ENCODE measurements at regions of chr6 and their contacts with region 1.

Region 1: DNA sequence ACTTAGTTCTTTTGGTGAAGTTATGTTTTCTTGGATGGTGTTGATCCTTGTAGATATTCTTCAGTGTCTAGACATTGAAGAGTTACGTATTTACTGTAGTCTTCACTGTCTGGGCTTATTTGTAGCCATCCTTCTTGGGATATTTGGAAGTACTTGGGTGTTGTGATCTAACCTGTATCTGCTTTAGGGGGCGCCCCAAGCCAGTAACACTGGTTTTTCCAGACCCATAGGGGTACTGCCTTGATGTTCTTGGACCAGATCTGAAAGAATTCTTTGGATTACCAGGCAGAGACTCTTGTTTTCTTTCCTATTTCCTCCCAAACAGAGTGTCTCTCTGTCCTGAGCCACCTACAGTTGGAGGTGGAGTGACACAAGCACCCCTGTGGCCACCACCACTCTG is 309.1 kb upstream of the IMPG1 start:
- DNase-seq: no peak
- ATAC-seq: no peak
- H3K4me3 ChIP-seq: no peak overlapping the region
- H3K27ac ChIP-seq: no peak overlapping the region
- H3K4me1 ChIP-seq: no peaks in the 10 kb centered on the region
- H3K27me3 ChIP-seq: no peaks in the 10 kb centered on the region
- CTCF ChIP-seq: no peak
- EP300 ChIP-seq: no peak
- POLR2A ChIP-seq: no peak
- RAD21 ChIP-seq: no peak

Region 2: GRCh38 chr6:75539136-75539535 is 842.5 kb before region 1 on chr6:
- CTCF ChIA-PET with region 1: no interaction called
- POLR2A ChIA-PET with region 1: no interaction called
- in situ Hi-C with region 1: loop called (anchors 5 kb)
- intact Hi-C with region 1: no loop called
- DNase-seq: no peak
- ATAC-seq: no peak
- H3K4me3 ChIP-seq: no peak overlapping the region
- H3K27ac ChIP-seq: no peak overlapping the region
- H3K4me1 ChIP-seq: no peaks in the 10 kb centered on the region
- H3K27me3 ChIP-seq: no peaks in the 10 kb centered on the region
- CTCF ChIP-seq: no peak
- EP300 ChIP-seq: no peak
- POLR2A ChIP-seq: no peak
- RAD21 ChIP-seq: no peak

Region 3: DNA sequence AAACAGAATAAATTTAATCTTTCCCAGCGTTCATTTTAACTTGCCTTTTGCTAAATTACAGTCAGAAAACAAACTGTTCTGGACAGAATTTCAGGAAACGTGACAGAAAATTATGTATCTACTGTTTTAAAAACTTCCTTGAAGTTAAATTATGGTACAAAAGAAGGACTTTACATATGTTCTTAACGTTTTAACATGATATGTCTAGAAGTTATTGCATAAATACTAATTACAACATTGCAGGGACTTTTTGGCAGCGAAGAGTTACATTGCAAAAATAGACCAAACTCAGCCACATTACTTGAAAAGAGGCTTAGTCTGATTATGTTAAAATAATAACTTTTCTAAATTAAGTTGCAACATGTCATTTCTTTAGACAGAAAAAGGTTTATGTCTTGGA is 167.1 kb before region 1 on chr6:
- CTCF ChIA-PET with region 1: no interaction called
- POLR2A ChIA-PET with region 1: no interaction called
- in situ Hi-C with region 1: no loop called
- intact Hi-C with region 1: no loop called
- DNase-seq: no peak
- ATAC-seq: no peak
- H3K4me3 ChIP-seq: no peak overlapping the region
- H3K27ac ChIP-seq: no peak overlapping the region
- H3K4me1 ChIP-seq: no peaks in the 10 kb centered on the region
- H3K27me3 ChIP-seq: no peaks in the 10 kb centered on the region
- CTCF ChIP-seq: no peak
- EP300 ChIP-seq: no peak
- POLR2A ChIP-seq: no peak
- RAD21 ChIP-seq: no peak

Region 4: DNA sequence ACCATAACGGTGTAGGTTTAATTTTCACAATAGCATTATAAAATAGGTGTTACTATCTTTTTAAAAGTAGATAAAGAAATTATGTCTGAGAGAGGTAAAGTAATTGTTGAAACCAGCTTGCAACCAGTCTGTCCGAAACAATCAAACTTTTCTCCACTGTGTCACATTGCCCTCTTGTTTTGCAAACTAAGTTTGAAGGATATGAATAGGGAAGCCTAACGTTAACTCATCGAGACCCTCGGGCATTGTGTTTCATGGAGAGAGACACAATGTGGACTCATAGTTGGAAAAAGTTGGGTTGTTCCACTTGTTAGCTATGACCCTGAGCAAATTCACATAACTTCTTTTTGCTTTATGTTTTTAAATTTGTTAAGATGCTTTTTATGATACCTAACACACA is 54.7 kb before region 1 on chr6:
- CTCF ChIA-PET with region 1: no interaction called
- POLR2A ChIA-PET with region 1: no interaction called
- in situ Hi-C with region 1: no loop called
- intact Hi-C with region 1: no loop called
- DNase-seq: no peak
- ATAC-seq: no peak
- H3K4me3 ChIP-seq: no peak overlapping the region
- H3K27ac ChIP-seq: no peak overlapping the region
- H3K4me1 ChIP-seq: no peaks in the 10 kb centered on the region
- H3K27me3 ChIP-seq: no peaks in the 10 kb centered on the region
- CTCF ChIP-seq: no peak
- EP300 ChIP-seq: no peak
- POLR2A ChIP-seq: no peak
- RAD21 ChIP-seq: no peak

Measured in K562 (cell line).